PC-3 (cell line): ENCODE measurements at regions of chr7 and their contacts with region 1.

Region 1: GRCh38 chr7:13981070-13981469 is 8.4 kb downstream of the ETV1 start:
- DNase-seq: peak; percentile 91
- ATAC-seq: peak; percentile 95
- H3K4me3 ChIP-seq: no peak overlapping the region; the same call in 1 of the 2 replicates
- H3K27ac ChIP-seq: peak overlapping the region; percentile 55
- H3K4me1 ChIP-seq: peaks cover 38% of the 10 kb centered on the region
- H3K27me3 ChIP-seq: no peaks in the 10 kb centered on the region
- CTCF ChIP-seq: no peak

Region 2: DNA sequence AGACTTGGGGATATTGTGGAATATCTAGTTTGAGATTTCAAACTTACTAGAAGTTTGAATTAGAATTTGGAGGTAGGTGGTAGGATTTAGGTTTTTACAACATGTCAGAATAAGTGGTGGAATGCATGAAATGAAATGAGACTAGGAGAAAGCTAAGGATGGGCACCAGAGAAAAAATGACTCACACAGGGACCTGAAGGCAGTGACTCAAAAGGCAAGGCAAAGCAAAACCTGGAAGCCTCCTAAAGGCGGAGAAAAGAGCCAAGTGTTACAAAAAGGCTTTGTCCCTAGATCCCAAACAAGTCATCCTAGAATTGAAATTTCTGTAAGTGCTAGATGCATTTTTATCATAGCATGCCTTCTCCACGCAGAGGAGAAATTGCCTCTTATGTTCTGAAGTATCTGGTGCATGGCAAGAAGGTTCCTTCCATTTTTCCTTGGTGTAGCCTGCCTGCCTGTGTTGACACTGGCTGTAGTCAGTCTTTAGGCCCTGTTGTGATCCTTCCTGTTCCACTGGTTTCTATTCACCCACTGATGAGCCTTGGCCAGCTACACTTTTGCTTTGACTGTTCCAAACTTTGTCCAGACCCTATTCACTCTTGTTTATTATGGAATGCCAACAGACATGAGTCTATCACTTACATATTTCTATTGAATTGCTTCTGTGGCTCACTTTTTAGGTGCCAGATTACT is 100.9 kb before region 1 on chr7:
- CTCF ChIA-PET with region 1: no interaction called
- POLR2A ChIA-PET with region 1: no interaction called
- intact Hi-C with region 1: loop called (anchors 1 kb)
- DNase-seq: peak; percentile 85
- ATAC-seq: peak; percentile 88
- H3K4me3 ChIP-seq: peak overlapping the region; percentile 16; the same call in 1 of the 2 replicates
- H3K27ac ChIP-seq: peak overlapping the region; percentile 90
- H3K4me1 ChIP-seq: peaks cover 42% of the 10 kb centered on the region
- H3K27me3 ChIP-seq: no peaks in the 10 kb centered on the region
- CTCF ChIP-seq: no peak

Region 3: DNA sequence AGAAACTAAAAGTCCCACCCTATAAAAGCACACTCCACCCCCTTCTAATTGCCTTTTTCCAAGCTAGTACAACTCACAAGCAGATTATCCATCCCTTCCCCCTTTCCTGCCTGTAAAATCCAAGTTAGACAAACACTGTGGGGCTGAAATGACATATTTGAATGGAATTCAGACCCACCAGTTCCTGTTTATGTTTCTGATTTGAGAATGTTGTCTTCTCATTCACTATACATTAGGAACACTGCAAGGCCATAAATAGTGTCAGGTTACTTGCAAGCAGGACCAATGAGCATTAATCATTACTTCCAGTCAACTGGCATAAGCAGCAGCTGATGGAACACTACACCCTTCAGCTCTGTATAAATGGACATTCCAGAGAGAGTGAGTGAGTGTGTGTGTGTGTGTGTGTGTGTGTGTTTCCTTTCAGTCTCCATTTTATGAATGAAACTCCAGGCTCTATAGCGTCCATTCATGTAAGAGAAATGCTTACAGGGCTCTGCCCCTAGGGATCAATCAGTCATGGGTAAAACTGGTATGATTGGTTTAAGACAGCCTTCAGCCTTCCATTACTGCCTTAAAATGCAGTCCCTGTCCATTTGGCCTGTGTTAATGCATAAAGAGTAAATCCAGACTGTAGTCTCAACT is 60.9 kb before region 1 on chr7:
- CTCF ChIA-PET with region 1: no interaction called
- POLR2A ChIA-PET with region 1: no interaction called
- intact Hi-C with region 1: loop called (anchors 1 kb)
- DNase-seq: peak; percentile 97
- ATAC-seq: peak; percentile 99
- H3K4me3 ChIP-seq: peak overlapping the region; percentile 57
- H3K27ac ChIP-seq: peak overlapping the region; percentile 93
- H3K4me1 ChIP-seq: peaks cover 21% of the 10 kb centered on the region
- H3K27me3 ChIP-seq: no peaks in the 10 kb centered on the region
- CTCF ChIP-seq: no peak

Region 4: DNA sequence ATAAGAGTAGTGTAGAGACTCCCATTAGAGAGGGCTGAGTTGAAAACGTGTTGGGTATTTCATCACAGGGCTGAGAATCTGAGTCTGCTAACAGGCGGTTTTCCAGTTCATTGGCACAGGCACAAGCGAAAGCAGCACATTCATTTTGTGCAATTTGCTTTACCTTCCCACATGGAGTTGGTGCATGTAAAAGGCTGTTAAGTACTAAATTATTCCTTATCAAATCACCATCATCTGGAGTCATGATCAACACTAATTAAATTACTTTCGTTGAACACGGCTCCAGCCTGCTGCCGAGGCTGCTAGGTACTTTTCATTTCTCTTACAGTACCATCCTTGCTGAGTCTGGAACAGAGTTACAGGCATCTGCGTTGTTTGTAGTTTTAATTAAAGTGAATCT is 35.4 kb before region 1 on chr7:
- CTCF ChIA-PET with region 1: no interaction called
- POLR2A ChIA-PET with region 1: no interaction called
- intact Hi-C with region 1: loop called (anchors 2 kb)
- DNase-seq: no peak
- ATAC-seq: no peak
- H3K4me3 ChIP-seq: no peak overlapping the region
- H3K27ac ChIP-seq: no peak overlapping the region
- H3K4me1 ChIP-seq: no peaks in the 10 kb centered on the region
- H3K27me3 ChIP-seq: no peaks in the 10 kb centered on the region
- CTCF ChIP-seq: no peak